CD4-positive, alpha-beta memory T cell (primary cell): ENCODE measurements at regions of chr15 and their contacts with region 1.

Region 1: GRCh38 chr15:50003786-50004334 is 115.2 kb downstream of the ATP8B4 start:
- DNase-seq: peak; percentile 44 to 58 (median 48)
- H3K4me3 ChIP-seq: no peak overlapping the region
- H3K4me3 Mint-ChIP-seq: no peak overlapping the region
- H3K27ac ChIP-seq: no peak overlapping the region
- H3K27ac Mint-ChIP-seq: peak overlapping the region in 5 of 7 donors; percentile 13 to 63 (median 41)
- H3K4me1 ChIP-seq: peaks cover 5% of the 10 kb centered on the region
- H3K4me1 Mint-ChIP-seq: peaks cover 0 to 9% (median 6%) of the 10 kb centered on the region in 4 donors
- H3K27me3 ChIP-seq: no peaks in the 10 kb centered on the region
- H3K27me3 Mint-ChIP-seq: no peaks in the 10 kb centered on the region

Region 2: GRCh38 chr15:49235446-49236124 is 768.3 kb before region 1 on chr15:
- CTCF ChIA-PET with region 1: interaction called, 11 read pairs
- POLR2A ChIA-PET with region 1: no interaction called
- intact Hi-C with region 1: no loop called
- DNase-seq: peak; percentile 36 to 46 (median 41)
- H3K4me3 ChIP-seq: no peak overlapping the region
- H3K4me3 Mint-ChIP-seq: no peak overlapping the region
- H3K27ac ChIP-seq: no peak overlapping the region
- H3K27ac Mint-ChIP-seq: peak overlapping the region in 6 of 7 donors; percentile 31 to 86 (median 70)
- H3K4me1 ChIP-seq: peaks cover 10% of the 10 kb centered on the region
- H3K4me1 Mint-ChIP-seq: peaks cover 10 to 16% (median 13%) of the 10 kb centered on the region in 4 donors
- H3K27me3 ChIP-seq: no peaks in the 10 kb centered on the region
- H3K27me3 Mint-ChIP-seq: no peaks in the 10 kb centered on the region

Region 3: GRCh38 chr15:49471733-49472132 is 532.1 kb before region 1 on chr15:
- CTCF ChIA-PET with region 1: interaction called, 10 read pairs
- POLR2A ChIA-PET with region 1: no interaction called
- intact Hi-C with region 1: loop called (anchors 5 kb)
- DNase-seq: peak in 2 of 5 donors; percentile 0 to 39
- H3K4me3 ChIP-seq: no peak overlapping the region
- H3K4me3 Mint-ChIP-seq: peak overlapping the region in 4 of 8 donors; percentile 7 to 72 (median 48)
- H3K27ac ChIP-seq: no peak overlapping the region
- H3K27ac Mint-ChIP-seq: peak overlapping the region in 2 of 7 donors; percentile 4 to 34
- H3K4me1 ChIP-seq: no peaks in the 10 kb centered on the region
- H3K4me1 Mint-ChIP-seq: peaks cover 0 to 8% (median 6%) of the 10 kb centered on the region in 4 donors
- H3K27me3 ChIP-seq: no peaks in the 10 kb centered on the region
- H3K27me3 Mint-ChIP-seq: no peaks in the 10 kb centered on the region

Region 4: DNA sequence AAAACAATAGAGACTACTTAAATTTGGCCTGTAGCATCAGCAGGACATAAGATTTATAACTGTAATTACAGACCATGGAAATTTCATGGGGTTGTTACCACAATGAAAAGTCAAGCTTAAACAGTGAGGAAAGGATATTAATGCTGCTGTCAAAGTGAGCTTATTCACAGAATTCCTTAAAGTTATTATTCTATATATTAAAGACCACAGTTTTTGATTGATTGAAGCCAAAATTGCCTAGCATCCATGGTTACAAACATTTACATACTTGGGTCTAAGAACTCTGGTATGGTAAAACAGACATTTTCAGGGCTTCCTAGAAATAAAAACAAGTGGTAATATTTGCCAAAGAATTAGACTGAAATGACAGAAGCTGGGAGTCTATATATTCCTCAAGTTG is 133.4 kb before region 1 on chr15:
- CTCF ChIA-PET with region 1: no interaction called
- POLR2A ChIA-PET with region 1: no interaction called
- intact Hi-C with region 1: no loop called
- DNase-seq: no peak
- H3K4me3 ChIP-seq: no peak overlapping the region
- H3K4me3 Mint-ChIP-seq: no peak overlapping the region
- H3K27ac ChIP-seq: no peak overlapping the region
- H3K27ac Mint-ChIP-seq: no peak overlapping the region
- H3K4me1 ChIP-seq: no peaks in the 10 kb centered on the region
- H3K4me1 Mint-ChIP-seq: no peaks in the 10 kb centered on the region
- H3K27me3 ChIP-seq: no peaks in the 10 kb centered on the region
- H3K27me3 Mint-ChIP-seq: peaks cover 0 to 7% of the 10 kb centered on the region in 2 donors